Sigmoid colon (tissue), 7 donors: ENCODE measurements at regions of chr11 and their contacts with region 1.

Region 1: DNA sequence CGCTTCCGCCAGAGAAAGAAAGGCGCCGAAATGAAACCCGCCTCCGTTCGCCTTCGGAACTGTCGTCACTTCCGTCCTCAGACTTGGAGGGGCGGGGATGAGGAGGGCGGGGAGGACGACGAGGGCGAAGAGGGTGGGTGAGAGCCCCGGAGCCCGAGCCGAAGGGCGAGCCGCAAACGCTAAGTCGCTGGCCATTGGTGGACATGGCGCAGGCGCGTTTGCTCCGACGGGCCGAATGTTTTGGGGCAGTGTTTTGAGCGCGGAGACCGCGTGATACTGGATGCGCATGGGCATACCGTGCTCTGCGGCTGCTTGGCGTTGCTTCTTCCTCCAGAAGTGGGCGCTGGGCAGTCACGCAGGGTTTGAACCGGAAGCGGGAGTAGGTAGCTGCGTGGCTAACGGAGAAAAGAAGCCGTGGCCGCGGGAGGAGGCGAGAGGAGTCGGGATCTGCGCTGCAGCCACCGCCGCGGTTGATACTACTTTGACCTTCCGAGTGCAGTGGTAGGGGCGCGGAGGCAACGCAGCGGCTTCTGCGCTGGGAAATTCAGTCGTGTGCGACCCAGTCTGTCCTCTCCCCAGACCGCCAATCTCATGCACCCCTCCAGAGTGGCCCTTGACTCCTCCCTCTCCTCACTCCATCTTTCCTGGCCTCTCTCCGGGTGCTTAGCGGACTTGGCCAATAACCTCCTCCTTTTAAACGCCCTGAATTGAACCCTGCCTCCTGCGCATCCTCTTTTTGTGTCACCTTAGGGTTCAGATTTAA is at the start of gene ATM:
- DNase-seq: peak; percentile 100
- H3K4me3 ChIP-seq: peak within 1 kb of the TSS; percentile 69 to 82 (median 74)
- H3K27ac ChIP-seq: peak within 1 kb of the TSS; percentile 90 to 95 (median 94)
- H3K4me1 ChIP-seq: peaks cover 0 to 35% (median 28%) of the 10 kb centered on the region in 4 donors
- H3K27me3 ChIP-seq: no peaks in the 10 kb centered on the region
- CTCF ChIP-seq: peak; percentile 28 to 63 (median 51)
- EP300 ChIP-seq: peak in 1 of 4 donors; percentile 58
- POLR2A ChIP-seq: peak; percentile 20 to 53
- total RNA-seq, gene ATM: 52.7 to 88.8 (median 71.8) TPM

Region 2: DNA sequence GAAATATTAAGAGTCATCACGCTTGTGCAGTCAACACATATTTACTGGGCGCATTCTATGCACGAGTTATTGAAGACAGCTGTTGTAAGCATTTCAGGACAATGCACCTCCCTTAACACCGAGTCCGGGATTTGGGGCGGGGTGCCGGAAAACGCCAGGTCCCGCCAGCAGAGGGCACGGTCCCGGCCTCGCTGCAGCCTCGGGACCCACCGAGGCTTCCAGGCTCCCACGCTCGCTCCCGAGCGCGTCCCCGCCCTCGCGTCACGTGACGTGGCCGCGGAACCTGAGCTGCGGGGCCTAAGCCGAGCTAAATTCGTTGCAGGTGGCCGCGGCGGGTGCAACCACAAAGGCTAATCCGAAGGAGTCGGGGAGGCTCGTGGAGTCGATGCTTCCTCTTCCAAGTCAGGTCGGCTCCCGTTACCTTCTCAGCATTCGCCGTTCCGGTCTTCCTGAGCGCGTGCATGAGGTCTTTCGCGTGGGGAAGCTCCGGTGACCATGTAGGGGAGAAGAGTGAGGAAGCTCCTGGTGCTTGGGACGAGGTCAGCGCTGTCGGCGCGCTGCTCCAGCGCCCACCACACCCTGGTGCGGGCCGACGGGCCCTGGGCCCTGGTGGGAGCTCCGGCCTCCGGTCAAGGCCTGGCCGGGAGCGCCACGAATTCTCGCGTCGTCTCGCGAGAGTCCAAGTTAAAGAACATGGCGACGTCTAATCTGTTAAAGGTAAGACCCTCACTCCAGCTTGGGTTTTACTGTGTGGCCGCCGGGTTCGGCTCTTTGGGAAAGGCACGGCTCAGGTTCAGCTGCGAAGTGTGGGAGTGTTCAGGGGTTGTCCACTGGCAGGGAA is 214.0 kb before region 1 on chr11 and contains the start of gene CUL5:
- intact Hi-C with region 1: loop called (anchors 2 kb)
- DNase-seq: peak; percentile 96
- H3K4me3 ChIP-seq: peak within 1 kb of the TSS; percentile 83 to 99 (median 85)
- H3K27ac ChIP-seq: peak within 1 kb of the TSS; percentile 97 to 99 (median 98)
- H3K4me1 ChIP-seq: peaks cover 0 to 46% (median 37%) of the 10 kb centered on the region in 4 donors
- H3K27me3 ChIP-seq: no peaks in the 10 kb centered on the region
- CTCF ChIP-seq: peak; percentile 59 to 90 (median 80)
- EP300 ChIP-seq: peak in 1 of 4 donors; percentile 18
- POLR2A ChIP-seq: peak in 1 of 2 donors; percentile 54
- total RNA-seq, gene CUL5: 26.5 to 33.7 (median 29.6) TPM

Region 3: GRCh38 chr11:108121274-108122155 is 101.4 kb before region 1 on chr11 and contains the start of gene ACAT1:
- intact Hi-C with region 1: loop called (anchors 2 kb)
- DNase-seq: peak; percentile 99
- H3K4me3 ChIP-seq: peak within 1 kb of the TSS; percentile 59 to 84 (median 72)
- H3K27ac ChIP-seq: peak within 1 kb of the TSS; percentile 87 to 96 (median 92)
- H3K4me1 ChIP-seq: peaks cover 0 to 39% (median 34%) of the 10 kb centered on the region in 4 donors
- H3K27me3 ChIP-seq: no peaks in the 10 kb centered on the region
- CTCF ChIP-seq: peak; percentile 31 to 50 (median 36)
- EP300 ChIP-seq: no peak
- POLR2A ChIP-seq: peak; percentile 84 to 92
- total RNA-seq, gene ACAT1: 142 to 225 (median 163) TPM

Region 4: GRCh38 chr11:108467091-108467823 is 244.4 kb after region 1 on chr11 and contains the start of gene C11orf65:
- intact Hi-C with region 1: loop called (anchors 1 kb)
- DNase-seq: peak; percentile 99
- H3K4me3 ChIP-seq: peak within 1 kb of the TSS; percentile 56 to 73 (median 64)
- H3K27ac ChIP-seq: peak within 1 kb of the TSS; percentile 94 to 98 (median 97)
- H3K4me1 ChIP-seq: peaks cover 0 to 11% (median 0%) of the 10 kb centered on the region in 4 donors
- H3K27me3 ChIP-seq: no peaks in the 10 kb centered on the region
- CTCF ChIP-seq: no peak
- EP300 ChIP-seq: peak in 1 of 4 donors; percentile 24
- POLR2A ChIP-seq: peak; percentile 93 to 96
- total RNA-seq, gene C11orf65: 0.14 to 1.1 (median 0.51) TPM

Region 5: DNA sequence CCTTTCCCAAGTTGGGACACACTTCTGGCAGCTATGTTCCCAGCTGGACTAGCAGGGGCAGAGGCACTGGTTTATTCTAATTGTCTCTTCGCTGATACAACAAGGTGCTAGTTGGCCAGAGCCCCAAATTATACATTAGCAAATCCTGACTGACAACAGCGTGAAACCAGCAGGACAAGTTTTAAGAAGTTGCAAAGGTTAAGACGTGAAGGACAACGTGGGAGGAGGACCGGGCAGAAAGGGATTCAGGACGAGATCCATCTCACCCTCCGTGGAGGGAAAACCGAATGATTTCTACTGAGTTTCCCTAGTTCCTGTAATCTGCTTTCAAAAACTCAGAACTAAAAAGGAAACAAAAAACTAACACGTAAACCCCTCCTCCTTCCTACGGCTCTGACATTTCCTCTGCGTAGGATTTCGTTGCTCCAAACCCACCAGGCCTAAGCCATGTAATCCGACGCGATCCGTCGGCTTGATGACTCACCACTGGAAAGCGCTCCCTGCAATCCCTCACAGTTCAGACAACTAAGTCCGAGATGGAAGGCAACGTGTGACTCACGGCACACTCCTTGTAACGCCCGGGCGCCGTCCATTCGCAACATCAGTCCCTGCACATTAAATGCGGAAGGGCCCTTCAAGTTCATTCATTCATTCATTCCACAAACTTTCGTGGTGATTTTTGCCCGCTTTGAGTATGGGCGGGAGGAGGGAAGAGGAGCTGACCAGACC is 274.6 kb after region 1 on chr11:
- intact Hi-C with region 1: loop called (anchors 5 kb)
- DNase-seq: peak; percentile 96
- H3K4me3 ChIP-seq: peak overlapping the region; percentile 57 to 84 (median 74)
- H3K27ac ChIP-seq: peak overlapping the region; percentile 92 to 98 (median 96)
- H3K4me1 ChIP-seq: peaks cover 0 to 16% (median 7%) of the 10 kb centered on the region in 4 donors
- H3K27me3 ChIP-seq: no peaks in the 10 kb centered on the region
- CTCF ChIP-seq: no peak
- EP300 ChIP-seq: peak in 1 of 4 donors; percentile 28
- POLR2A ChIP-seq: peak; percentile 63 to 71

Region 6: DNA sequence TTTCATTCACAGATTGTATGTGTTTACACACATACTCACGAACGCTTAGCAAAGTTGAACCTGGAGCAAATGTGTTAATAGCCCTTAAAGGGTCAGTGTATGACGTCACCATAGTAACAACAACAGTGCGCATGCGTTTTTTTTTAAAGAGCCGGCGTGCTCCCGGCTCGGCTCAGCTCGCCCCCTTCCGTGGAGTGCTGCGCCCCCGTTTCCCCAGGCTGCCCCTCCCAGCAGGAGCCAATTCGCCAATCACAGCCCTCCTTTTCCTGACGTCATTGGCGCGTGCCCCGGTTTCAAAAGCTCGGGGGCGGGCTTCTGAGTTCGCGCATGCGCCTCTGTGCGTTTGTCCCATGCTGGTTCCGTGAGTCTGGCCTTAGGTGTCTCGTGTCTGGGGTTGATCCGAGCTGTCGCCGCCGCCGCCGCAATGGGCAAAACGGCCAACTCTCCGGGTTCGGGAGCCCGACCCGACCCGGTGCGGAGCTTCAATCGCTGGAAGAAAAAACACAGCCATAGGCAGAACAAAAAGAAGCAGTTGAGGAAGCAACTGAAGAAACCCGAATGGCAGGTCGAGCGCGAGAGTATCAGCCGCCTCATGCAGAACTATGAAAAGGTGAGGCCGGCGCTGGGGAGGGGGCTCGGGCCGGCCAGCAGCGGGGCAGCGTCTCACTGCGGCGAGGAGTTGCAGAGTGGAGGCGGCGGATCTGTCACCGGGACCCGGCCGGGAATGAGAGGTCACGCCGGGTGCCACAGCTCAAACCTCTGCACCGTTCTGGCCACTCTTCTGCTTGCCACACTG is 442.1 kb after region 1 on chr11 and contains the start of gene DDX10:
- intact Hi-C with region 1: loop called (anchors 5 kb)
- DNase-seq: peak; percentile 99
- H3K4me3 ChIP-seq: peak within 1 kb of the TSS; percentile 72 to 90 (median 81)
- H3K27ac ChIP-seq: peak within 1 kb of the TSS; percentile 68 to 81 (median 70)
- H3K4me1 ChIP-seq: peaks cover 0 to 29% (median 26%) of the 10 kb centered on the region in 4 donors
- H3K27me3 ChIP-seq: no peaks in the 10 kb centered on the region
- CTCF ChIP-seq: no peak
- EP300 ChIP-seq: peak in 1 of 4 donors; percentile 21
- POLR2A ChIP-seq: no peak
- total RNA-seq, gene DDX10: 12.8 to 41.0 (median 26.7) TPM